Lower leg skin (tissue), 4 donors: ENCODE measurements at regions of chr11 and their contacts with region 1.

Region 1: DNA sequence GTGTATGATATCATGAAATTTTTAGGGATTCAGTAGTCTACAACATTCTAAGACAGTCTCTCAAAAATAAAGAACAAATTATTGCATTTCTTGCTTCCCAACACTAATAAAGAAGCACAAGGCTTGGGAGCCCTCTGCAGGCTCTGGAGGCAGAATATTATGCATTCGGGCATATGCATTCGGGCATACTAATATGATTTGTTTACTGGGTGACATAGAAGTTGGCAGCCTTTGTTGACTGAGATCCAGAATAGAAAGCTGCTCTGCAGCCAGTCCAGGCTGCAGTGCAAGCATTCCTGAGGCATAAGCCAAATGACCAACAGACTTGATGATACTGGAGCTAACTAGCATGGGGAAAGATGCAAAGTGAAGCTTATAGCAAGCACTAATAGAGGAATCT is 945.5 kb downstream of the OPCML start:
- DNase-seq: no peak
- H3K4me3 ChIP-seq: no peak overlapping the region
- CTCF ChIP-seq: no peak
- POLR2A ChIP-seq: no peak

Region 2: GRCh38 chr11:132245403-132246385 is 341.1 kb before region 1 on chr11:
- intact Hi-C with region 1: no loop called
- DNase-seq: no peak
- H3K4me3 ChIP-seq: no peak overlapping the region
- CTCF ChIP-seq: no peak
- POLR2A ChIP-seq: no peak

Region 3: DNA sequence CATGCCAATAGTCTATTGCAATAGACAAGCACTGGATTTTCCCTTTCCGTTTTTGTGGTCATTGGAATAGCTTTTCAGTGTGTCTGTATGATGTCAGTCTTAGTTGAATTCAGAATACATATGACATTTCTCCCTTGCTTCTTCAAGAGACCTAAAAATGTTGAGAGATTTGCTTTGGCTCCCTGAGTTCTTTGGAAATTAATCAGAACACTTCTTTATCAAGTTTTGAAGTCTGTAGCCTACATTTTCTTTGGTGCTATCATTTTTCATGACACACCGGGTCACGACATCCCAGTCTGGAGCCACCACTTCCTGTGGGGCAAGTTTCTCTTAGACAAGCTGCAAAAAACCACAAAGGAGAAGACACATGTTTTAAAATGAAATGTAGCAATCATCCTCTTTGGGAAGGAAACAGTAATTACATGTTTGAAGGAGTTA is 98.4 kb after region 1 on chr11:
- intact Hi-C with region 1: no loop called
- DNase-seq: no peak
- H3K4me3 ChIP-seq: no peak overlapping the region
- CTCF ChIP-seq: no peak
- POLR2A ChIP-seq: no peak

Region 4: DNA sequence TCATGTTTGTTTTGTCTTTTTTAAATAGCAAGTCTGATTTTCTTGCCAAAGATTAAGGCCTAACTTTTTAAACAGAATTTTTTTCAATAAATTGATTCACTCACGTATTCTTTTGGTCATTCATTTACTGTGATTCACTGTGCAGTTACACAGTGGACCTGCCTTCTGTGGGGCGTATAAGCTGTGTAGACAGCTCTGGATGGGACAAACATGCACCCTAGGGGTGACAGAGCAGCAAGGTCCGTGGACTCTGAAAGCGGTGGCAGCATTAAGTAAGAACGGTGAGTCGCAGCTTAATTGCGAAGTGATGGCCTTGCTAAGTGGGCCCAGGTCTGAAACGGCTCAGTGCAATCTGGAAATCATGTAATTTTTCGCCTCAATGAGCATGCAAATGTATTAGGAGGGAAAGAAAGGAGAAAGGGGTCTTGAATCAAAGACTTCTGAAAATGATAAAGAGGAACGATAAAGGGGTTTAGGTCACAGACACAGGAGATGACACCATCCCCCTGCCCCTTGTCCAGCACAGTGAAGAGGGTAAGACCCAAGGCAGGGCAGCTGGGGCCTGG is 1145.4 kb after region 1 on chr11:
- intact Hi-C with region 1: loop called (anchors 5 kb)
- DNase-seq: no peak
- H3K4me3 ChIP-seq: no peak overlapping the region
- CTCF ChIP-seq: no peak
- POLR2A ChIP-seq: no peak